ENCODE measurements at regions of chr7 and their contacts with region 1.

Region 1: DNA sequence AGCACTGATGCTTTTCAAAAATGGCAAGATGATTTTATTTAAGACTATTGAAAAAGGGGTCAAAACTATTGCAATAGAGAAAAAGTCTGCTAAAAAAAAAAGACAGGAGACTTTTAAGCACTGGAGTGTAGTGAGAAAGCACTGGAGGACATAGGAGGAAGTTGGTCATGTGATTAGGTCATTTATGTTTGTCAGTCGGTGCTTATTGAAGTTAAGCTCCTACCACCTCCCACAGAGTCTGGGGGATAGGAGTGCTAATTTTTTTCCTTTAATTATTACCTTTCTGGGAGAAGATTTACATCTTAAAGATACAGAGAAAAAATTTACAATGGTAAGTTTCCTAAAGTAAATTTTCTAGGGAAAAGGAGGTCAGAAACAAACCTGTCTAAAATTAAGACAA is 80.2 kb upstream of the TMEM229A start:
- DNase-seq: no peak
- ATAC-seq: peak; percentile 48; the same call in 1 of the 2 replicates
- H3K4me3 Mint-ChIP-seq: no peak overlapping the region
- H3K27ac Mint-ChIP-seq: no peak overlapping the region
- H3K4me1 Mint-ChIP-seq: peaks cover 11% of the 10 kb centered on the region
- H3K27me3 Mint-ChIP-seq: no peaks in the 10 kb centered on the region
- CTCF ChIP-seq: no peak

Region 2: GRCh38 chr7:123929107-123929506 is 183.9 kb before region 1 on chr7:
- CTCF ChIA-PET with region 1: no interaction called
- POLR2A ChIA-PET with region 1: no interaction called
- DNase-seq: no peak
- ATAC-seq: peak; percentile 92
- H3K4me3 Mint-ChIP-seq: no peak overlapping the region
- H3K27ac Mint-ChIP-seq: peak overlapping the region; percentile 57; the same call in 1 of the 2 replicates
- H3K4me1 Mint-ChIP-seq: peaks cover 27% of the 10 kb centered on the region
- H3K27me3 Mint-ChIP-seq: no peaks in the 10 kb centered on the region
- CTCF ChIP-seq: no peak

Region 3: DNA sequence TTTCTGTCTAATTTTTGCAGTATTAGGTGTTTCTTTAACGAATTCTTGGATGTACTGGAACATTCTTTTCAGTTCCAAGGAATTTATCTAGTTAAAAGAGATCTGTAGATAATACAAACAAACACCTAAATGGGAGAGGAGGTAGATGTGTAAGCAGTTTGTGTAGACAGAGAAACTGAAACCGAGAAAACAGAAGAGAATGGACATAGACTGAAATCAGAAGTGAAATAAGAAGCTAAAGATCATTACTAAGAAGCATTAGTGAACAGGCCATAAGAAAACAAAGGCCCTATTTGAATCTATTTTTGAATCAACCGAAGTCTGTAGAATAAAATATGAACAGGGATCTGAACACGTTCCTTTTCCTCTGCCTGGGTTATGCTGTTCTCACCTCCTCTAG is 53.7 kb before region 1 on chr7:
- CTCF ChIA-PET with region 1: no interaction called
- POLR2A ChIA-PET with region 1: no interaction called
- DNase-seq: no peak
- ATAC-seq: no peak
- H3K4me3 Mint-ChIP-seq: no peak overlapping the region
- H3K27ac Mint-ChIP-seq: no peak overlapping the region
- H3K4me1 Mint-ChIP-seq: no peaks in the 10 kb centered on the region
- H3K27me3 Mint-ChIP-seq: no peaks in the 10 kb centered on the region
- CTCF ChIP-seq: no peak

Region 4: DNA sequence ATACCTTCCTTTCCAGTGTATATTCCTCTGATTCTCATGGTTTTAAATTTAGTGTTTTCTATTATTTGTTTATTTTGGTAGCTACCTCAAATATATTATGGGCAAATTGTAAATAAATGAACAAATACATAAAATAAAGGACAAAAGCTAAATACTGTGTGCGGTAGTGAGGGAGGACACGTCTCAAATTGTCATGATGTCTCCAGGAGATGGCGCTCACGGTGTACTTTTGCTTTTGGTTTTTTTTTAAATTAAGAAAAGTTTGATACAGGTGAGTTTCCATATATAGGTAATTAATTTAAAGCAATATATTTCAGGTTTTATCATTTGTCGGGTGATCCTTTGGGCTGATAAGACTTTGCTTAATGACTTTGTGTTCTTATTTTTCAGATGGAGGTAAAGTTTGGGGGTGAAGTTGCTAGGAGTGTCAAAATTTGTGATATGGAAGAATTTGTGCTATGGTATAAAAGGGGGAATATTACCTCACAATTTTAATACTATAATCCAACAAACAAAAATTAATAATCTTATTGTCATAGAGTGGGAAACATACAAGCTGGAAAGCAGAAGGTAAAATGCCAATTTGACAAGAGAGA is 11.8 kb before region 1 on chr7:
- CTCF ChIA-PET with region 1: interaction called, 11 read pairs
- POLR2A ChIA-PET with region 1: no interaction called
- DNase-seq: peak; percentile 22
- ATAC-seq: peak; percentile 51
- H3K4me3 Mint-ChIP-seq: no peak overlapping the region
- H3K27ac Mint-ChIP-seq: no peak overlapping the region
- H3K4me1 Mint-ChIP-seq: peaks cover 15% of the 10 kb centered on the region
- H3K27me3 Mint-ChIP-seq: peaks cover 4% of the 10 kb centered on the region; the same call in 1 of the 2 replicates
- CTCF ChIP-seq: peak; percentile 53

Region 5: DNA sequence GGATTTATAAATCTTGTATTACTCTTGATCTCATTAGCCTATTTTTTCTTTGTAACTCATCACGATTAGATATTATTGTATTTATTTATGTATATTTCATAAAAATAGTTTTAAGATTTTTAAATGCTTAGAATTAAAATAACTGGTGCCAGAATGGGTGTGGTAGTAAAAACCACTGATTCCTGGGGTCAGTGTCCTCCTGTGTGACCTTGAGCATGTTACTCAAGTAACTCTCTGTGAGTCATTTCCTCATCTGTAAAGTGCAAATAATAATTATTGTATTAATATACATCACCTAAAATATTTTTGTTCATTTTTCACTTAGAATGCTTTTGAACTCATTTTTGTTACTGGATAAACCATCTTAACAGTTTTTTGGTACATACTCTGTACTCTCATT is 11.2 kb after region 1 on chr7:
- CTCF ChIA-PET with region 1: no interaction called
- POLR2A ChIA-PET with region 1: no interaction called
- DNase-seq: no peak
- ATAC-seq: no peak
- H3K4me3 Mint-ChIP-seq: no peak overlapping the region
- H3K27ac Mint-ChIP-seq: no peak overlapping the region
- H3K4me1 Mint-ChIP-seq: no peaks in the 10 kb centered on the region
- H3K27me3 Mint-ChIP-seq: no peaks in the 10 kb centered on the region
- CTCF ChIP-seq: no peak